Right cardiac atrium (tissue), 5 donors: ENCODE measurements at regions of chr12 and their contacts with region 1.

Region 1: DNA sequence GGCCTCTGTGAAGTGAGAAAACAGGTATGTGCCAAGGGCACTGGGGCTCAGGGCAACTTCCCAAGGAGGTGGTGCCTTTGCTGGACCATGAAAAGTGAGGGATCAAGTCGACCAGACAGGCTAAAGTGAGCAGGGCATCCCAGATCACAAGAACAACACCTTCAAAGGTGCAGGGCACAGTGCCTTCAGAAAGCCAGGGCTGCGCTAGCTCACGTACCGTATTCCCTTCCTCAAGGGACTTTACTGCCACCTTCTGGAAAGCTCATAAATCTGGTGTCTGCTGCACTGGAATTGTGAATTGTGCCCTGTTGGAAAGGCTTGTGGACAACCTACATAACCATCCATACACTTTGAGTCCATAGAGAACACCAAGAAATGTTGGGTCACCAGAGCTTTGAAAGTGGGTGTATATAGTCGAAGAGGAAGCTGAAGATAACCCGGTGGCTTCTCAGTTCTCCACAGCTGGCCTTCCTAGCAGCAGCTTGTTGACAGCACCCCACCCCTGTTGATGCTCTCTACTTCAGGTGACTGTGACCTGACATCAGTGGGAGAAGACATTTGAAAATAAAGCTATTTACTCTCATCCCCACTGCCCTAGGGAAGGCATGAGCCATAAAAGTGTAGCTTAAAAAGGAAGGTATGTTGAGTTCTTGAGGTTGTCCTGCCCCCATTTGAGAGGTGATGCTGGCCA is 24.5 kb downstream of the FIGNL2 start:
- DNase-seq: no peak
- ATAC-seq: peak in 1 of 2 donors; percentile 29
- H3K4me3 ChIP-seq: no peak overlapping the region
- H3K27ac ChIP-seq: no peak overlapping the region
- H3K4me1 ChIP-seq: no peaks in the 10 kb centered on the region
- H3K27me3 ChIP-seq: no peaks in the 10 kb centered on the region

Region 2: DNA sequence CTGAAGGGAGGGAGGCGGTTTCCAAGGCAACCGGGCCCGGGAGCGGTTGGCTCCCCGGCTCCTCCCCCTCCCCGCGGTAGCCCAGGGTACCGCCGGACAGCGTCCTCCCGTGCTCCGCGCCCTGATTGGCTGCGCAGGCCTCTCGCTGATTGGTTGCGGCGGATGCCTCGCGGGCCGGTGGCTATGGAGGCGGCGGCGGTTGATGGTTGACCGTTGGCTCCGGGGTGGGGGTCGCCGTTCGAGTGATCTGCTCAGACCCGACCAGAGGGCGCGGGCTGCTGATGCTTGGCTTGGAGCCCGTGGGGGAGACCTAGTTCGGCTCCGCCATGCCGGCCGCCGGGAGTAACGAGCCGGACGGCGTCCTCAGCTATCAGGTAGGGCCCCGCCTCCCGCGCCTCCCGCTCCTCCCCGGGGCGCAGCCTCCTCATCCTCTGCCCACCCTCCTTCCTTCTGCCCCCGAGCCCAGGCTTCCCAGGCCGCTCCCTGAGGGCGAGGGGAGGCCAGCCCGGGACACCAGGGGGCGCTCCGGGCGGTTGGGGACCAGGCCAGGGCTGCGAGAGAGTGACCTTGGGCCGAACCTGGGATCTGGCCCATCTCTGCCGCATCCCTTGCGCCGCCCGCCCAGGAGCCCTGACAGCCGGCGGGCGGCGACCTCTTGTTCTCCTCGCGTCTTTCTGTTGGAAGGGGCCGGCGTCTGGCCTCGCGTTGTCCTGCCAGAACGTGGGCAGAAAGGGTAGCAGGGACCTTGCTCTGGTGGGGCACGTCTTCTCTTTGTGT is 399.2 kb before region 1 on chr12 and contains the start of gene SLC4A8:
- intact Hi-C with region 1: loop called in 1 of 4 experiments (anchors 10 kb)
- DNase-seq: peak; percentile 89 to 94 (median 92)
- ATAC-seq: peak; percentile 96
- H3K4me3 ChIP-seq: peak within 1 kb of the TSS; percentile 27
- H3K27ac ChIP-seq: no peak within 1 kb of the TSS
- H3K4me1 ChIP-seq: no peaks in the 10 kb centered on the region
- H3K27me3 ChIP-seq: no peaks in the 10 kb centered on the region
- total RNA-seq, gene SLC4A8: 0.23 to 0.50 (median 0.24) TPM

Region 3: DNA sequence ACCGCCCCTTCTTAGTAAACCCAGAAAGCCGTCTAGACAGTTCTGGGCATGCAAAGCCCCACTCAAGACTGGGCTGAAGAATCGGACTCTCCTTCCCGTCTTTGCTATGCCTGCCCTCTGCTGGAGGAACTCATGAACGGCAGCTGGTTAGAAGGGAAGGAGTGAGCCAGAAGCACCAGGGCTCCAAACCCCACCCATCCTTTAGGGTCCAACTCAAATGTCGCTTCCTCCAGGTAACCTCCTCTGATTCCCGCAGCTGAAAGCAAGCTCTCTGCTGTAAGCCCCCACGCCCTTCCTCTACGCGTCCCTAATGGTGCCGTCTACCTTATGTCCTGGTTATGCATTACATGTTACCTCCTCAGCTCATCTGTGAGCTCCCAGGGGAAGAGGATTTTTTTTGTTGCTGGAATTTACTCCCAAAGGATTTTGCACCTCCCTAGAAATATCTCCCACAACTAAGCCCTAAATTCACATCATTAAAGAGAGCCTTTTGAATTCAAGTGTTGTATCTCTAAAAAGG is 292.0 kb before region 1 on chr12:
- intact Hi-C with region 1: loop called in 1 of 4 experiments (anchors 10 kb)
- DNase-seq: peak; percentile 60 to 85 (median 78)
- ATAC-seq: peak; percentile 81 to 86
- H3K4me3 ChIP-seq: no peak overlapping the region
- H3K27ac ChIP-seq: no peak overlapping the region
- H3K4me1 ChIP-seq: no peaks in the 10 kb centered on the region
- H3K27me3 ChIP-seq: no peaks in the 10 kb centered on the region

Region 4: GRCh38 chr12:51579321-51579850 is 244.6 kb before region 1 on chr12:
- intact Hi-C with region 1: no loop called
- DNase-seq: no peak
- ATAC-seq: no peak
- H3K4me3 ChIP-seq: no peak overlapping the region
- H3K27ac ChIP-seq: no peak overlapping the region
- H3K4me1 ChIP-seq: no peaks in the 10 kb centered on the region
- H3K27me3 ChIP-seq: no peaks in the 10 kb centered on the region

Region 5: DNA sequence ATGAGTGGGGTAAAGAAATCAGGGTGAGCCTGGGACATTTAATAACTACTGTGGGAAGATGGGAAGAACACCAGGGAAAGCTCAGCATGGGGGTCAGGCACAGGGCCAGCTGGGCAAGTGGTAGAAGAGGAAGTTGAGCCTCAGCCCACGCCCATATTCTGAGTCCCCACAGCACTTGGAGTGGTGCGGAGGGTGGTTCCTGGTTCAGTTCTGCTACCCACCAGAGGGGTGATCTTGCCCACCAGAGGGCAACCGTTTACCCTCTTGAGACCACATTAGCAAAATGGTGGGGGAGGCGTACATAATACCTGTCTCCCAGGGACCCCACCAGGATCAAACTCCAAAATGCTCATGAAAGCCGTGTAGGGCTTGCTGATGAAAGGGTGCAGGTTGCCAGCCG is 47.1 kb after region 1 on chr12:
- intact Hi-C with region 1: loop called in 2 of 4 experiments (anchors 5 to 10 kb)
- DNase-seq: peak; percentile 59 to 85 (median 80)
- ATAC-seq: peak in 1 of 2 donors; percentile 19
- H3K4me3 ChIP-seq: no peak overlapping the region
- H3K27ac ChIP-seq: no peak overlapping the region
- H3K4me1 ChIP-seq: peaks cover 3% of the 10 kb centered on the region
- H3K27me3 ChIP-seq: no peaks in the 10 kb centered on the region